IMR-90 (cell line): ENCODE measurements at regions of chr4 and their contacts with region 1.

Region 1: GRCh38 chr4:71184195-71184781 is 154.5 kb upstream of the SLC4A4 start:
- DNase-seq: peak; percentile 75
- ATAC-seq: no peak
- H3K4me3 ChIP-seq: no peak overlapping the region
- H3K27ac ChIP-seq: no peak overlapping the region
- H3K4me1 ChIP-seq: no peaks in the 10 kb centered on the region
- H3K27me3 ChIP-seq: no peaks in the 10 kb centered on the region
- CTCF ChIP-seq: peak; percentile 66
- POLR2A ChIP-seq: no peak
- RAD21 ChIP-seq: peak; percentile 70

Region 2: DNA sequence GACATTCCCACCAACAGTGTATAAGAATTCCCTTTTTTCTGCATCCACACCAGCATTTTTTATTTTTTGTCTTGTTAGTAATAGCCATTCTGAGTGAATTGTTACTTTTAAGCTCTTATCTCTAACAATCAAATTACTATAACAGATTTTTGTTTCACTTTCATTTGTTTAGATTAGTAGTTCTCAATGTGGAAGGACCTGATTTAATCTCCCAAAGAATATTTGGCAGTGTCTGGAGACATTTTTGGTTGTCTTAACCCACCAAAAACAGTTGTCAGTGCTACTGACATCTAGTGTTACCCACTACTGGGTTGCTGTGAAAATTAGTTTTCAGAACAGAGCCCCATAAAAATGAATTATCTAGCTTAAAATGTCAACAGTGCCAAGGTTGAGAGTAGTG is 424.7 kb before region 1 on chr4:
- CTCF ChIA-PET with region 1: no interaction called
- POLR2A ChIA-PET with region 1: no interaction called
- dilution Hi-C with region 1: no loop called
- in situ Hi-C with region 1: no loop called
- intact Hi-C with region 1: no loop called
- DNase-seq: peak; percentile 21
- ATAC-seq: 0 out of 2 replicates have a peak, but pooled peaks have one; percentile 24
- H3K4me3 ChIP-seq: no peak overlapping the region
- H3K27ac ChIP-seq: no peak overlapping the region
- H3K4me1 ChIP-seq: 0 out of 2 replicates have a peak, but pooled peaks cover 2% of the 10 kb centered on the region
- H3K27me3 ChIP-seq: no peaks in the 10 kb centered on the region
- CTCF ChIP-seq: no peak
- POLR2A ChIP-seq: no peak
- RAD21 ChIP-seq: no peak

Region 3: GRCh38 chr4:70839589-70840093 is 344.6 kb before region 1 on chr4 and contains the start of gene GRSF1:
- CTCF ChIA-PET with region 1: no interaction called
- POLR2A ChIA-PET with region 1: no interaction called
- dilution Hi-C with region 1: no loop called
- in situ Hi-C with region 1: no loop called
- intact Hi-C with region 1: loop called (anchors 2 kb)
- DNase-seq: peak; percentile 91
- ATAC-seq: peak; percentile 98
- H3K4me3 ChIP-seq: peak within 1 kb of the TSS; percentile 70
- H3K27ac ChIP-seq: peak within 1 kb of the TSS; percentile 63
- H3K4me1 ChIP-seq: peaks cover 5% of the 10 kb centered on the region
- H3K27me3 ChIP-seq: no peaks in the 10 kb centered on the region
- CTCF ChIP-seq: no peak
- POLR2A ChIP-seq: peak; percentile 48; the same call in 1 of the 2 replicates
- RAD21 ChIP-seq: peak; percentile 31; the same call in 1 of the 2 replicates
- total RNA-seq, gene GRSF1: 67.7 and 107 TPM in 2 replicates

Region 4: DNA sequence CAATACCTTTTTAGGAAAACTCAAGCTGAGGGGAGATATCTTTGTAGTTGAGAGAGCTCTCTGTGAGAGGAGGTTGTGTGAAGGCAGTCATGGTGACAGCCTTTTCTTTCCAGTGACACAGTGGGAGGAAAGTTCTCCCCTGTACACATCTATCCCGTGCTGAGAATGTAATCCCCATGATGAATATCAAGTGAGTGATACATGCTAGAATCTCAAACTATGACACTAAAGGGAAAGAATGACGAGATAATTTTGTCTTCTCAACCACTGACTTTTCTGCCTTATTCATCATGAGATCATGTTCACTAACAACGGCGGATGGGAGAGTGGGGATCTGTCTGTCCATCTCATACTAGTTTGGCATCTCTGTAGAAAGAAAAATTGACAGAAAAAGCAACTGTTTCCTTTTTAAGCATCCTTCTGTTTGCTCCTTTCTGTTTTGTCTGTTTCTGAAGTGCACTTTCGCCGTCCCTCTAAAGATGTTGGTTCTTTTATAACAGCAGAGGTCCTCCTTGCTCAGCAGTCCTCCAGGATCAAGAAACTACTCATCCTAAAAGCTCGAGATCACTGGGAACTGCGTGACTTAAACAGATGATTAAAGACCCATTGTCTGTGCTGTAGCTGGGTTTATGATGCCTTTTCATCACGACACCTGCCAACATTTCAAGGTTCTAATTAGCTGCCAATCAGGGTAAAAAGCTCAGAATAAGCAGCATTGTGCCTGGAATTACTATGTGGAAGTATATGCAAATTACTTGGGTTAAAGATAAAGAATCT is 53.3 kb before region 1 on chr4:
- CTCF ChIA-PET with region 1: interaction called, 7 read pairs
- POLR2A ChIA-PET with region 1: no interaction called
- dilution Hi-C with region 1: no loop called
- in situ Hi-C with region 1: no loop called
- intact Hi-C with region 1: loop called (anchors 2 kb)
- DNase-seq: peak; percentile 89
- ATAC-seq: peak; percentile 77
- H3K4me3 ChIP-seq: peak overlapping the region; percentile 49; the same call in 1 of the 2 replicates
- H3K27ac ChIP-seq: peak overlapping the region; percentile 38
- H3K4me1 ChIP-seq: peaks cover 10% of the 10 kb centered on the region
- H3K27me3 ChIP-seq: no peaks in the 10 kb centered on the region
- CTCF ChIP-seq: peak; percentile 50
- POLR2A ChIP-seq: no peak; the same call in 1 of the 2 replicates
- RAD21 ChIP-seq: peak; percentile 58

Region 5: DNA sequence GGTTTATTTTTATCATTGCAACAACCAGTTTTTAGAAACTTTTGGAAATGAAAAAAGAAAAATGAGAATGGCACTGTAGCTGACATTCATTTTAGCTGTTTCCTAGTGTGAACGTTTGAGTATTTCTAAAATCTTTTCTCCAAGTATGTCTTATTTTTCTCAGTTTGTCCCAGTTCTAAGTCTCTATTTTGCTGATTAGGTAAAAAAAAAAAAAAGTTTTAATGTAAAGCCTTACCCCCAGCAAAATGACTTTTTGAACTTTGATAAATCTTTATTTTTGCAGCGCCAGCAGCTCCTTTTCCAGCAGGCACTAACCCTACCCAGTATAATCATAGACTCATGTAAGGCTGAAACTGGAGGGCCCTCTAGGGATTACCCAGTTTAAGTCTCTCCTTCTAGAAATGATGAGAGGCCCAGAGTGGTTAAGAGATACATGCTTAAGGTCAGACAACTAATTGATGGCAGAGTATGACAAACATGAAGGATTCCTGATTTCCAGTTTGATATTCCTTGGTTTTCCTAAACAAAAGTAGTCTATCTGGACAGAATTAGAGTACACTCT is 70.2 kb after region 1 on chr4:
- CTCF ChIA-PET with region 1: interaction called, 4 read pairs
- POLR2A ChIA-PET with region 1: no interaction called
- dilution Hi-C with region 1: no loop called
- in situ Hi-C with region 1: no loop called
- intact Hi-C with region 1: loop called (anchors 5 kb)
- DNase-seq: no peak
- ATAC-seq: 0 out of 2 replicates have a peak, but pooled peaks have one; percentile 24
- H3K4me3 ChIP-seq: no peak overlapping the region
- H3K27ac ChIP-seq: no peak overlapping the region
- H3K4me1 ChIP-seq: peaks cover 18% of the 10 kb centered on the region
- H3K27me3 ChIP-seq: no peaks in the 10 kb centered on the region
- CTCF ChIP-seq: no peak
- POLR2A ChIP-seq: no peak
- RAD21 ChIP-seq: no peak

Region 6: DNA sequence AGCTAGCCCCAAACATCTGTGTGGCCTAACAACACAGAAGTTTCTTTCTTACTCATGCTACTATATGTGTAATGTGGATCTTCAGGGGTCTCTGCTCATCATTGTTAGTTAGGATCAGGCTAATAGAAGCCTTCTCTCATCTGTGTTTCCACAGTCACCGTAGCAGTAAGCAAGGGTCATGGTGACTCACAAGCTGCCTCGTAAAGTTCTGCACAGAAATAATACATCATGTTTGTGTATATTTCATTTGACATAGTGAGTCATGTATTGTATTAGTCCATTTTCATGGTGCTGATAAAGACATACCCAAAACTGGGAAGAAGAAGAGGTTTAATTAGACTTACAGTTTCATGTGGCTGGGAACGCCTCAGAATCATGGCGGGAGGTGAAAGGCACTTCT is 193.3 kb after region 1 on chr4:
- CTCF ChIA-PET with region 1: interaction called, 3 read pairs
- POLR2A ChIA-PET with region 1: no interaction called
- dilution Hi-C with region 1: no loop called
- in situ Hi-C with region 1: no loop called
- intact Hi-C with region 1: loop called (anchors 5 kb)
- DNase-seq: peak; percentile 95
- ATAC-seq: peak; percentile 89
- H3K4me3 ChIP-seq: no peak overlapping the region
- H3K27ac ChIP-seq: no peak overlapping the region
- H3K4me1 ChIP-seq: peaks cover 6% of the 10 kb centered on the region; the same call in 1 of the 2 replicates
- H3K27me3 ChIP-seq: no peaks in the 10 kb centered on the region
- CTCF ChIP-seq: no peak
- POLR2A ChIP-seq: no peak
- RAD21 ChIP-seq: no peak

Region 7: DNA sequence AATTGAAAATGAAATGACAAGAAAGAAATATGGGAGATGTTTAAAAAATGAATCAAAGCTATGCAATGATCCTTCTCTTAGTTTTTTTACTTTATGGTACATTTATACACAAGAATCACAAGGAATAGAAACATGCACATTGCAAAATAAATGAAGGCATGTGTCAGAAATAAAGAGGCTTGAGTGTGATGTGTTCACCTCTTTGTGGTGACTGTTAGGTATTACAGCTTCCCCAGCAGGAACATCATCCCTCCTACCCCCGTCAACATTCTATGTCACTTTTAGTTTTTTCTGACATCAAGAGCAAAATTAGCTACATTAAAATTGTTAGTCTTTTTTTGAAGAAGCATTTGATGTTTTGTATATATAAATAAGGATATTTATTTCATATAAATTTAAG is 369.3 kb after region 1 on chr4:
- CTCF ChIA-PET with region 1: interaction called, 5 read pairs
- POLR2A ChIA-PET with region 1: no interaction called
- dilution Hi-C with region 1: no loop called
- in situ Hi-C with region 1: loop called (anchors 10 kb)
- intact Hi-C with region 1: loop called (anchors 1 kb)
- DNase-seq: peak; percentile 64
- ATAC-seq: peak; percentile 53; the same call in 1 of the 2 replicates
- H3K4me3 ChIP-seq: no peak overlapping the region
- H3K27ac ChIP-seq: no peak overlapping the region
- H3K4me1 ChIP-seq: peaks cover 9% of the 10 kb centered on the region
- H3K27me3 ChIP-seq: no peaks in the 10 kb centered on the region
- CTCF ChIP-seq: peak; percentile 63
- POLR2A ChIP-seq: no peak
- RAD21 ChIP-seq: peak; percentile 85